Gastrocnemius medialis (tissue), 4 donors: ENCODE measurements at regions of chr17 and their contacts with region 1.

Region 1: GRCh38 chr17:7856883-7857723 is at the start of gene NAA38:
- DNase-seq: peak; percentile 97 to 98
- ATAC-seq: peak; percentile 93 to 95
- H3K4me3 ChIP-seq: peak within 1 kb of the TSS; percentile 65 to 87 (median 80)
- H3K27ac ChIP-seq: peak within 1 kb of the TSS; percentile 91 to 99 (median 96)
- H3K4me1 ChIP-seq: peaks cover 26 to 34% of the 10 kb centered on the region in 2 donors
- H3K27me3 ChIP-seq: no peaks in the 10 kb centered on the region
- CTCF ChIP-seq: peak; percentile 4 to 72 (median 63)
- POLR2A ChIP-seq: peak in 1 of 2 donors; percentile 48
- total RNA-seq, gene NAA38: 57.4 to 133 (median 96.6) TPM

Region 2: DNA sequence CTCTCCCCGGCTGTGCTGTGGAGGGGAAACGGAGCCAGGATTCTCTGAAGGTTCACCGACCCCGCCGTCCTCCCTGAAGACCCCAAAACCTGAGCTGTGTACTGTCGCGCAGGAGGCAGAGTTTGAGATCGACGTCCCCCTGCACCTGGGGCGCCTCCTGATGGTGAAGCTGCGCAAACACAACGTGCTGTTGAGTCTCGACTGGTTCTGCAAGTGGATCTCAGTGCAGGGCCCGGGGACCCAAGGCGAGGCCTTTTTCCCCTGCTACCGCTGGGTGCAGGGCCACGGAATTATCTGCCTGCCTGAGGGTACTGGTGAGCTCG is 962.9 kb before region 1 on chr17:
- in situ Hi-C with region 1: no loop called
- intact Hi-C with region 1: no loop called
- DNase-seq: no peak
- ATAC-seq: no peak
- H3K4me3 ChIP-seq: no peak overlapping the region
- H3K27ac ChIP-seq: no peak overlapping the region
- H3K4me1 ChIP-seq: no peaks in the 10 kb centered on the region
- H3K27me3 ChIP-seq: peaks cover 27 to 40% (median 32%) of the 10 kb centered on the region in 3 donors
- CTCF ChIP-seq: peak in 2 of 5 experiments; percentile 14 to 23
- POLR2A ChIP-seq: no peak

Region 3: DNA sequence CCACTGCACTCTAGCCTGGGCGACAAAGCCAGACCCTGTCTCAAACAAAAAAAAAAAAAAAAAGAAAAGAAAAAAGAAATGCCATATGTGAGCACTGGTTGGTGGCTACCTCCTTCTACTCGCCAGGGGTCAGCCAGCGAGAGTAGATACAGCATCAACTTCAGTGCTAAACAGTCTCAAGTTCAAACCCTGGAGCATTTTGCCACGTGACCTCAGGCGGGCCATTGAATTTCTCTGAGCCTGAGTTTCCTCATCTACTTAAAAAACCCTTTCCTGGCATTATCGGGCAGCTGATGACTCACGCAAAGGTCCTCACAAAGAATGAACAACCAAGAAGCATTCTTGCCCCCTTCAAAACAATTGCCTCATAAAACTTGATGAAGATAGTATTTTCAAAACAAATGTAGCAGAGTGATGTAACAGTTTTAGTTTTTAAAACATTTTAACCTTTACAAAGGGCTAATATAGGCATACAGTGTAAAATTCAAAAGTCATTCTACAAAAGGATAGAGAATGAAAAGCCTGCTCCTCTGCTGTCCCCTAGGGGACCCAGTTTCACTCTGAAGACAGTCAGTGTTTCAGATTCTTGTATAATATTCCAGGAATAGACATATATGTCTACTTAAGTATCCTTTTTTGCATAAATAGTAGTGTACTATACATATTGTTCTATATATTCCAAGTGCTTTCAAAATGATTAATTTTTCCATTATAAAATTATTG is 111.2 kb before region 1 on chr17:
- in situ Hi-C with region 1: no loop called
- intact Hi-C with region 1: loop called (anchors 10 kb)
- DNase-seq: no peak
- ATAC-seq: peak in 1 of 2 donors; percentile 36
- H3K4me3 ChIP-seq: no peak overlapping the region
- H3K27ac ChIP-seq: no peak overlapping the region
- H3K4me1 ChIP-seq: no peaks in the 10 kb centered on the region
- H3K27me3 ChIP-seq: peaks cover 0 to 7% (median 0%) of the 10 kb centered on the region in 3 donors
- CTCF ChIP-seq: no peak
- POLR2A ChIP-seq: no peak

Region 4: DNA sequence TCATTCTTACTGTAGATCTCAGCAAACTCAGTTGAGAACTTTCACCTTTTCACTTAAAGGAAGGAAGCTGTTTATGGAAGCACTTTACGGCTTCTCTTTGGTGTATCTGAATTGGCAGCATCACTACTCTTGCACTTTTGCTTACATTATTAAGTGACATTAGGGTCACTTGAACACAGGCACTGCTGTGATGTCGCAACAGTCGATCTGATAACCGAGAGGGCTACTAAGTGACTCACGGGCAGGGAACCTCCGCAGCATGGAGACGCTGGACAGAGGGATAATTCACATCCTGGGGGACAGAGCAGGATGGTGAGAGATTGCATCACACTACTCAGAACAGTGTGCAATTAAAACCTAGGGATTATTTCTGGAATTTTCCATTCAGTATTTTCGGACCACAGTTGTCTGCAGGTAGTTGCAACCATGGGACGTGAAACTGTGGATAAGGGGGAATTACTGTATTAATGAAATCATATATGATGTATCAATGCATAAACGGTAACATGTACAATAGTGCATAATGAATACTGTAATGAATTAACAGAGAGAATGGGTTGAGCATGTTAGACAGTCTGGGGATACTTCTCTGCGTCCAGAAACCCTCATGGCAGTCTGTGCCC is 83.0 kb before region 1 on chr17:
- in situ Hi-C with region 1: no loop called
- intact Hi-C with region 1: no loop called
- DNase-seq: no peak
- ATAC-seq: no peak
- H3K4me3 ChIP-seq: no peak overlapping the region
- H3K27ac ChIP-seq: no peak overlapping the region
- H3K4me1 ChIP-seq: no peaks in the 10 kb centered on the region
- H3K27me3 ChIP-seq: peaks cover 0 to 5% (median 4%) of the 10 kb centered on the region in 3 donors
- CTCF ChIP-seq: no peak
- POLR2A ChIP-seq: no peak

Region 5: GRCh38 chr17:7786866-7787265 is 70.2 kb before region 1 on chr17:
- in situ Hi-C with region 1: no loop called
- intact Hi-C with region 1: no loop called
- DNase-seq: no peak
- ATAC-seq: no peak
- H3K4me3 ChIP-seq: no peak overlapping the region
- H3K27ac ChIP-seq: no peak overlapping the region
- H3K4me1 ChIP-seq: no peaks in the 10 kb centered on the region
- H3K27me3 ChIP-seq: peaks cover 0 to 5% (median 0%) of the 10 kb centered on the region in 3 donors
- CTCF ChIP-seq: no peak
- POLR2A ChIP-seq: no peak

Region 6: DNA sequence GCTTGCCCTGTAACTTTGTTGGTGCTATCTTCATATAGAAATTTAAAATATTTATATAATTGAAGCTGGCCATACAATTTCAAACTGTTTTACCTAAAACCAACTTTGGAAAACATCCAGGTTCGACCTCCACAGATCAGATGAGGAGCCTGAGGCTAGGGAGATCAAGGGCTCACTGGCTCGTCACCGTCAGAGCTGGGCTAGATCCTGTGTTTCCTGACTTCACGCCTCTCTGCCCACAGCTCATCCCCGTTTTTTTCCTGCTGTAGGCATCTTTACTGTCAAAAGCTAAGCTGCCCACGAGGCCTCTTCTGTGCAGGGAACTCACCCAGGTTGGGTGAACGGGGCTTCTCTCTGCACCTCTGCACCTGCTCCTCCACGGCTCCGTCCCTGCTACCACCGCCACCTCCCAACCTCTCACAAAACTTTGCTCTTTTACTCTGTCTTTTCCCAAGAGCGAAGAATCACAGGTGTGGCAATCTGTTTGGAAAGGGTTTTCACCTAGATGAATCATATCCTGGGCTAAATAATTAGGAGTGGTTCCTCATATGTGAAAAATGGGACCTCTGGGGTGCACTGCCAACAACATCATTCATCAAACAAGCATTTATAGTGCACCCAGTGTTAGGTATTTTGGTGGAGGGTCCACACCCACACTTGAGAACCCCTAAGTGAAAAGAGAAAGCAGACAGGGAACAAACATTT is 47.9 kb before region 1 on chr17:
- in situ Hi-C with region 1: no loop called
- intact Hi-C with region 1: no loop called
- DNase-seq: no peak
- ATAC-seq: no peak
- H3K4me3 ChIP-seq: no peak overlapping the region
- H3K27ac ChIP-seq: no peak overlapping the region
- H3K4me1 ChIP-seq: no peaks in the 10 kb centered on the region
- H3K27me3 ChIP-seq: no peaks in the 10 kb centered on the region
- CTCF ChIP-seq: no peak
- POLR2A ChIP-seq: no peak

Region 7: DNA sequence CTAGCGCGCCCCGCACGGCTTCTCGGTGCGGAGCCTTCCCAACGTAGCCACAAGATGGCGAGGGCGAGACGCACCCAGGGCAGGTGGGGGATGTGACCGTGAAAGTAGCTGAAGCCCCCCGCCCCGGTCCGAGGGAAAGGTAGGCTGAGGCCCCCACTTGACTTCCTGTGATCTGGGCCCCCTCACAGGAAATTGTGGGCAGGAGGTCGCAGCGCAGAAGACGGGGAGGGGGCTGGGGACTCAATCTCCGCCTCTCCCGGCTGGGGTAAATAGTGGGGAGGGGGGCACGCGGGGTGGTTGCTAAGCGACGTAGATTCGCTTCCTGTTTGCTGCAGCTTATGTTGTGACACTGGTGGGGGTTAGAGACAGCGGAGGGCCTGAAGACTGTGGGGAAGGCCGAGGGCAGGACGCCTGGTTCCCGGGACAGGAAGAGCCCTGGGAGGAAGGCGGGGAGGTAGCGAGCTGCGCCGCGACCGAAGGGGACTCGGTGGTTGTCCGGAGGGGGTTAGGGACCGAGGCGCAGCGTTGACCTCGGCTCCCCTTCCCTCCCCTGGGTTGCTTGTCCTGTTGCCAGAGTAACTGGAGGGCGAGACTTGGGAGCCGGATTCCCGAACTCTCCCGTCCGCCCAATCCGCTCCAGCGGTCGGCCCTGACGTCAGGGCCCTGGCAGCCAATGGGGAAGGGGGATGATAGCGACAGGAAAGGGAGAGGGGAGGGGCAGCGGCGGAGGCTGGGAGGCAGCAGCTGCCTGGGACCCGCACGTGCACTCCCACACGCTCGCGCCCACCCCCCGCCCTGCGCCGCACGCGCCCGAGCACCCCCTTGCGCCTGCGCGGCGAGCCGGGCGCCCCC is 21.9 kb before region 1 on chr17:
- in situ Hi-C with region 1: no loop called
- intact Hi-C with region 1: loop called (anchors 1 kb)
- DNase-seq: peak; percentile 97 to 98
- ATAC-seq: peak; percentile 65 to 74
- H3K4me3 ChIP-seq: peak overlapping the region; percentile 81 to 90 (median 85)
- H3K27ac ChIP-seq: peak overlapping the region; percentile 97 to 100 (median 100)
- H3K4me1 ChIP-seq: peaks cover 39 to 44% of the 10 kb centered on the region in 2 donors
- H3K27me3 ChIP-seq: no peaks in the 10 kb centered on the region
- CTCF ChIP-seq: peak; percentile 87 to 96 (median 88)
- POLR2A ChIP-seq: peak; percentile 84 to 94

Region 8: GRCh38 chr17:7844292-7845154 is 12.6 kb before region 1 on chr17:
- in situ Hi-C with region 1: no loop called
- intact Hi-C with region 1: loop called (anchors 1 kb)
- DNase-seq: peak; percentile 93 to 95
- ATAC-seq: peak; percentile 70 to 73
- H3K4me3 ChIP-seq: peak overlapping the region; percentile 80 to 96 (median 88)
- H3K27ac ChIP-seq: peak overlapping the region; percentile 97 to 100 (median 100)
- H3K4me1 ChIP-seq: peaks cover 28 to 32% of the 10 kb centered on the region in 2 donors
- H3K27me3 ChIP-seq: no peaks in the 10 kb centered on the region
- CTCF ChIP-seq: no peak
- POLR2A ChIP-seq: peak; percentile 97

Region 9: GRCh38 chr17:7887482-7888183 is 30.5 kb after region 1 on chr17:
- in situ Hi-C with region 1: no loop called
- intact Hi-C with region 1: loop called (anchors 2 kb)
- DNase-seq: peak; percentile 65 to 80
- ATAC-seq: peak; percentile 61 to 72
- H3K4me3 ChIP-seq: peak overlapping the region; percentile 64 to 74 (median 68)
- H3K27ac ChIP-seq: peak overlapping the region; percentile 77 to 89 (median 81)
- H3K4me1 ChIP-seq: peaks cover 41 to 47% of the 10 kb centered on the region in 2 donors
- H3K27me3 ChIP-seq: peaks cover 24 to 27% (median 25%) of the 10 kb centered on the region in 3 donors
- CTCF ChIP-seq: peak in 1 of 5 experiments; percentile 5
- POLR2A ChIP-seq: peak in 1 of 2 donors; percentile 55

Region 10: DNA sequence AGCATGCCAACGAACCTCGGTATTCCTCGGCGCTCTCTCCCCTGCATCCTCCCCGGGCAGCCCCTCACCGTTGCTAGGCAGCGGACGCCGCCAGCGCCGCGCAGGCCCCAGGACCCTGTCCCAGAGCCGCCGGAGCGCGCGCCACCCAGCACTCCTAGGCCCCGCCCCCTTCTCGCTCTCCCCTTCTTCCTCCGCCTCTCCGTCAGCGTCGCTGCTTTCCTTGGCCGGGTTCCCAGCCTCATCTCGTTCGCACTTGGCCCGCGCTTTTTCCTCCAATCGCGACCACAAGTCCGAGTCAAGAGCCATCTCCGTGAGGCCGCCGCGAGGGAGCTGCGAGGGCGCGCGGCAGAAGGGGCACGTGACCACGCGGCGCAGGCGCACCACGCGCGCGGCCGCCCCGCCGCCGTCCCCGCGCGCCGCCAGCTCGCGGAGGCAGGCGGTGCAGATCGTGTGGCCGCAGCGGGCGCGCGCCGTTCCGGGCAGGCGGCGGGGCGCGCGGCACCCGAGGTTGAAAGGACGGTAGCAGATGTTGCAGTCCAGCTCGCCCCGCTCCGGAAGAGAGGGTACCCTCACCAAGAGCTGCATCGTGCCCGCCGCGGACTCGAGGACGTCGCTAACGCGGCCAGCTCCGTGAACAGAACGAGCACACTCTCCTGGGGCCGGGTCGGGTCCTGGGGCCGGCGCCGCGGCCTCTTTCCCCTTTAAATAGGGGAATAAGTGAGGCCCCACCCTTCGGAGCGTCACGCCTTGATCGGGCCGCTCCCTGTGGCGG is 58.7 kb after region 1 on chr17 and contains the start of gene RNF227:
- in situ Hi-C with region 1: no loop called
- intact Hi-C with region 1: loop called (anchors 5 kb)
- DNase-seq: peak; percentile 66 to 78
- ATAC-seq: peak; percentile 91 to 93
- H3K4me3 ChIP-seq: peak within 1 kb of the TSS; percentile 79 to 81 (median 80)
- H3K27ac ChIP-seq: peak within 1 kb of the TSS; percentile 85 to 92 (median 90)
- H3K4me1 ChIP-seq: peaks cover 17 to 21% of the 10 kb centered on the region in 2 donors
- H3K27me3 ChIP-seq: no peaks in the 10 kb centered on the region
- CTCF ChIP-seq: no peak
- POLR2A ChIP-seq: peak; percentile 56 to 59
- total RNA-seq, gene RNF227: 0.51 to 1.2 (median 0.62) TPM in 3 of 4 donors, not detected in the other

Region 11: GRCh38 chr17:7931709-7932482 is 74.8 kb after region 1 on chr17 and contains the starts of genes CNTROB and TRAPPC1:
- in situ Hi-C with region 1: no loop called
- intact Hi-C with region 1: loop called (anchors 5 kb)
- DNase-seq: peak; percentile 99 to 100
- ATAC-seq: peak; percentile 97 to 98
- H3K4me3 ChIP-seq: peak within 1 kb of the TSS; percentile 85 to 97 (median 94)
- H3K27ac ChIP-seq: peak within 1 kb of the TSS; percentile 83 to 90 (median 87)
- H3K4me1 ChIP-seq: peaks cover 17 to 19% of the 10 kb centered on the region in 2 donors
- H3K27me3 ChIP-seq: no peaks in the 10 kb centered on the region
- CTCF ChIP-seq: no peak
- POLR2A ChIP-seq: peak; percentile 78
- total RNA-seq, gene CNTROB: 3.6 to 14.3 (median 7.2) TPM
- total RNA-seq, gene TRAPPC1: 19.4 to 41.7 (median 30.0) TPM